A673 (cell line): ENCODE measurements at regions of chr5 and their contacts with region 1.

Region 1: DNA sequence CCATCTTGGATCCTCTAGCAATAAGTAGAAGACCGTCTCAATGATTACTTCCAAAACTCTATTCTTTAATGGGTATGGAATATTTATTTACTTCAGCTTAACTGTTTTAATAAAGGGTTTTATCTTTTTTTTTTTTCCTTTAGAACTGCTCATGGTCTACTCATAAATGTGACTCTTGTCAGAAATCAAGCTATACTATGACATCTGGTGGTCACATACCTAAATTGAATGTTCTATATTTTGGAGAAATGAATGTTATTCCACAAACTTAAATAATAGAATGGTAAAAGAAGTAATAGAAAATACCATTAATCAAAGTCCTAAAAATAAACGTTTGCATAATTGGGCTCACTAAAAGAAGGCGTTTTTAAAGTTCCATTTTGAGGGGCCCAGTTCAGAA is 131.2 kb upstream of the PLCXD3 start:
- DNase-seq: peak; percentile 27
- H3K4me3 ChIP-seq: no peak overlapping the region
- H3K27ac ChIP-seq: no peak overlapping the region
- H3K4me1 ChIP-seq: no peaks in the 10 kb centered on the region
- H3K27me3 ChIP-seq: no peaks in the 10 kb centered on the region
- CTCF ChIP-seq: peak; percentile 45; the same call in 1 of the 2 replicates

Region 2: GRCh38 chr5:41312478-41313060 is 329.1 kb before region 1 on chr5:
- CTCF ChIA-PET with region 1: no interaction called
- POLR2A ChIA-PET with region 1: no interaction called
- intact Hi-C with region 1: loop called (anchors 10 kb)
- DNase-seq: peak; percentile 87
- H3K4me3 ChIP-seq: no peak overlapping the region
- H3K27ac ChIP-seq: peak overlapping the region; percentile 93
- H3K4me1 ChIP-seq: peaks cover 45% of the 10 kb centered on the region
- H3K27me3 ChIP-seq: no peaks in the 10 kb centered on the region
- CTCF ChIP-seq: no peak

Region 3: GRCh38 chr5:41587668-41588067 is 54.0 kb before region 1 on chr5:
- CTCF ChIA-PET with region 1: no interaction called
- POLR2A ChIA-PET with region 1: no interaction called
- intact Hi-C with region 1: no loop called
- DNase-seq: no peak
- H3K4me3 ChIP-seq: no peak overlapping the region
- H3K27ac ChIP-seq: no peak overlapping the region
- H3K4me1 ChIP-seq: no peaks in the 10 kb centered on the region
- H3K27me3 ChIP-seq: no peaks in the 10 kb centered on the region
- CTCF ChIP-seq: no peak

Region 4: GRCh38 chr5:41754857-41755256 is 113.2 kb after region 1 on chr5:
- CTCF ChIA-PET with region 1: no interaction called
- POLR2A ChIA-PET with region 1: no interaction called
- intact Hi-C with region 1: no loop called
- DNase-seq: no peak
- H3K4me3 ChIP-seq: no peak overlapping the region
- H3K27ac ChIP-seq: no peak overlapping the region
- H3K4me1 ChIP-seq: no peaks in the 10 kb centered on the region
- H3K27me3 ChIP-seq: no peaks in the 10 kb centered on the region
- CTCF ChIP-seq: no peak; the same call in 1 of the 2 replicates

Region 5: DNA sequence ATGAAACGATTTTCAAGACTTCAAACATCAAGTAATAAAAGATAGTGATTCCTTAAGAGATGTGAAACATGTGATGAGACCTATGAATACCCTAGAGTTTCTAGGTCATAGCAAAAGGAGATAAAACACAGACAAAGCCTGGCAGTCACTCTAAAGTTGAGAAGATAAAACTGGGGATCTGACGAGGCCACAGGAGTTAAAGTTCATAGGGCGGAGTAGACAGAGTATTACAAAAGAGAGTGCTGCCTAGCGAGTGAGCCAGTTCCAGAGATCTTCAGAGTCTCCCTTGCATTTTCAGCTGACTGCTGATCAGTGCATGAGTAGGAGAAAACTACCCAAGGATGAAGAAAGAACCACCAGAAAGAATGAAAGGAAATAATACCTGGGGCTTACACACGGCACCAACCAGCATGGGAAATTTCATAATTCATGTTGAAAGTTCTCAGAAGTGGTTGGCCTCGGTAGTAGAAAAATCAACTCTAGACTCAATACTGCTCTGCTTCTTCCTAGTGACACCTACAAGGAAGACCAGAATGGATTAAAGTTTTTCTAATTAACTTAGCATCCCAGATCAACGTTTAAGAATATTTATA is 313.9 kb after region 1 on chr5:
- CTCF ChIA-PET with region 1: no interaction called
- POLR2A ChIA-PET with region 1: no interaction called
- intact Hi-C with region 1: no loop called
- DNase-seq: no peak
- H3K4me3 ChIP-seq: no peak overlapping the region
- H3K27ac ChIP-seq: no peak overlapping the region
- H3K4me1 ChIP-seq: no peaks in the 10 kb centered on the region
- H3K27me3 ChIP-seq: no peaks in the 10 kb centered on the region
- CTCF ChIP-seq: no peak